Activated CD8-positive, alpha-beta T cell treated with anti-CD3 and anti-CD28 coated beads, Interleukin-2, amount 10 ng/mL, durations not matched to agents 7 days and 5 days (primary cell): ENCODE measurements at regions of chr17 and their contacts with region 1.

Region 1: GRCh38 chr17:18183334-18184142 is at the start of gene ALKBH5:
- DNase-seq: peak; percentile 98
- ATAC-seq: peak; percentile 89
- H3K4me3 Mint-ChIP-seq: peak within 1 kb of the TSS; percentile 95
- H3K27ac Mint-ChIP-seq: peak within 1 kb of the TSS; percentile 100
- H3K4me1 Mint-ChIP-seq: peaks cover 57% of the 10 kb centered on the region
- H3K27me3 Mint-ChIP-seq: no peaks in the 10 kb centered on the region
- total RNA-seq, gene ALKBH5: 117 to 121 TPM

Region 2: DNA sequence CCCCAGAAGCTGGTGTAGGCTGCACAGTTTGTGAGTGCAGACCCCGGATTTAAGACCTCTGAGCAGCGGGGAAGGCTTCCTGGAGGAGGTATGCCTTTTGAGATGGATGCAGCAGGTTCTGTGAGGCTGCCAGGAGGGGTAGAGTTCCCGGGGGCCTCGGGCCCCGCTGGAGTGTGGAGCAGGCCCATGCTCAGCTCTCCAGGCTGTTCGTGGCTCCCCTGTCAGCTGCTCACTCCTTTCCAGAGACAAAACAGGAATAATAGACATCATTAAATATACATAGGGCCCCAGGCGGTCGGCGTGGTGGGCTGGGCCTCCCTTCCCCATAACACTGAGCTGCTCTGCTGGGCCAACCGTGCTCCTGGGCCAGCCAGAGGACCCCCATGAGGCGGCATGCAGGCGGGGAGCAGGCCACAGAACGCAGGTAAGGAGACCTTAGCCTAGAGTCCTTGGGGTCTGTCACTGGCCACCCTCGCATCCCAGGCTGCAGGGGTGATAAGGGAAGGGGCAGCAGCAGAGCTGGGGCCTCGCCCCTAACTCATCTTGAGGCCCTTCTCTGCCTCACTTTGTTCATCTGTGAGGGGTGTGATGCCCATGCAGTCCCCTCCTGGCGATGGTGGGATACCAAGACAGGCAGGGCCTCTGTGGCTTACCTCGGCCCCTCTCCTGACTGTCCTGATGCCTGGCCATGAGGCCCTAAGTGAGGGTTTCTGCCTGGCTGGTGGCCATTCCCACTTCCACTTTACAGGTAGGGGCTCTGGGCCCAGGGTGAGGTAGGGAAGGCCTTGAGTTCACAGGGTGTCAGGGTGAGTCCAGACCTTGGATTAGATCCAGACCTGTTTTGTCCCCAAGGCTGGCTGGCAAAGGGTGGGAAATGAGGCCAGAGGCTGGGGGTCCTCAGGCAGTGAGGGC is 74.9 kb before region 1 on chr17 and contains the start of gene MYO15A:
- CTCF ChIA-PET with region 1: no interaction called
- POLR2A ChIA-PET with region 1: no interaction called
- DNase-seq: no peak
- ATAC-seq: no peak
- H3K4me3 Mint-ChIP-seq: no peak within 1 kb of the TSS
- H3K27ac Mint-ChIP-seq: peak within 1 kb of the TSS; percentile 14
- H3K4me1 Mint-ChIP-seq: no peaks in the 10 kb centered on the region
- H3K27me3 Mint-ChIP-seq: no peaks in the 10 kb centered on the region
- total RNA-seq, gene MYO15A: 0.34 TPM

Region 3: GRCh38 chr17:18141210-18141803 is 42.2 kb before region 1 on chr17:
- CTCF ChIA-PET with region 1: interaction called, 19 read pairs
- POLR2A ChIA-PET with region 1: interaction called, 4 read pairs
- DNase-seq: peak; percentile 68
- ATAC-seq: peak; percentile 59
- H3K4me3 Mint-ChIP-seq: no peak overlapping the region
- H3K27ac Mint-ChIP-seq: no peak overlapping the region
- H3K4me1 Mint-ChIP-seq: peaks cover 2% of the 10 kb centered on the region
- H3K27me3 Mint-ChIP-seq: no peaks in the 10 kb centered on the region

Region 4: DNA sequence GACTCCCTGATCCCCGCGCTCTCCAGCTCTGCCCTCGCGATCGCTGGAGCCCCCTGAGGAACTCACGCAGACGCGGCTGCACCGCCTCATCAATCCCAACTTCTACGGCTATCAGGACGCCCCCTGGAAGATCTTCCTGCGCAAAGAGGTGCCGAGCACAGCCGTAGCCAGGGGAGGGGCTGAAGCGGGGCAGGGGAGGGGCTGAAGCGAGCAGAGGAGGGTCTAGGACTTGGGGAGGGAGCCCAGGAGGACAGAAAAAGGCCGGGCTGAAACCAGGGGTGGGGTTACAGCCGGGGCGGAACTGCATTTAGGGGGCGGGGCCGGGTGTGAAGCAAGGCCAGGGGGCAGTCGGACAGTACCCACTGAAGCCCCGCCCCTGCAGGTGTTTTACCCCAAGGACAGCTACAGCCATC is 29.8 kb before region 1 on chr17:
- CTCF ChIA-PET with region 1: interaction called, 10 read pairs
- POLR2A ChIA-PET with region 1: interaction called, 12 read pairs
- DNase-seq: peak; percentile 63
- ATAC-seq: peak; percentile 64
- H3K4me3 Mint-ChIP-seq: peak overlapping the region; percentile 60
- H3K27ac Mint-ChIP-seq: no peak overlapping the region
- H3K4me1 Mint-ChIP-seq: peaks cover 22% of the 10 kb centered on the region
- H3K27me3 Mint-ChIP-seq: peaks cover 4% of the 10 kb centered on the region

Region 5: GRCh38 chr17:18166894-18167293 is 16.6 kb before region 1 on chr17:
- CTCF ChIA-PET with region 1: interaction called, 7 read pairs
- POLR2A ChIA-PET with region 1: interaction called, 15 read pairs
- DNase-seq: no peak
- ATAC-seq: no peak
- H3K4me3 Mint-ChIP-seq: no peak overlapping the region
- H3K27ac Mint-ChIP-seq: no peak overlapping the region
- H3K4me1 Mint-ChIP-seq: no peaks in the 10 kb centered on the region
- H3K27me3 Mint-ChIP-seq: no peaks in the 10 kb centered on the region

Region 6: GRCh38 chr17:18217412-18218015 is 34.0 kb after region 1 on chr17:
- CTCF ChIA-PET with region 1: interaction called, 12 read pairs
- POLR2A ChIA-PET with region 1: no interaction called
- DNase-seq: peak; percentile 82
- ATAC-seq: peak; percentile 95
- H3K4me3 Mint-ChIP-seq: no peak overlapping the region
- H3K27ac Mint-ChIP-seq: no peak overlapping the region
- H3K4me1 Mint-ChIP-seq: no peaks in the 10 kb centered on the region
- H3K27me3 Mint-ChIP-seq: no peaks in the 10 kb centered on the region